Activated CD4-positive, alpha-beta T cell treated with anti-CD3 and anti-CD28 coated beads for 36 hours (primary cell): ENCODE measurements at regions of chr4 and their contacts with region 1.

Region 1: DNA sequence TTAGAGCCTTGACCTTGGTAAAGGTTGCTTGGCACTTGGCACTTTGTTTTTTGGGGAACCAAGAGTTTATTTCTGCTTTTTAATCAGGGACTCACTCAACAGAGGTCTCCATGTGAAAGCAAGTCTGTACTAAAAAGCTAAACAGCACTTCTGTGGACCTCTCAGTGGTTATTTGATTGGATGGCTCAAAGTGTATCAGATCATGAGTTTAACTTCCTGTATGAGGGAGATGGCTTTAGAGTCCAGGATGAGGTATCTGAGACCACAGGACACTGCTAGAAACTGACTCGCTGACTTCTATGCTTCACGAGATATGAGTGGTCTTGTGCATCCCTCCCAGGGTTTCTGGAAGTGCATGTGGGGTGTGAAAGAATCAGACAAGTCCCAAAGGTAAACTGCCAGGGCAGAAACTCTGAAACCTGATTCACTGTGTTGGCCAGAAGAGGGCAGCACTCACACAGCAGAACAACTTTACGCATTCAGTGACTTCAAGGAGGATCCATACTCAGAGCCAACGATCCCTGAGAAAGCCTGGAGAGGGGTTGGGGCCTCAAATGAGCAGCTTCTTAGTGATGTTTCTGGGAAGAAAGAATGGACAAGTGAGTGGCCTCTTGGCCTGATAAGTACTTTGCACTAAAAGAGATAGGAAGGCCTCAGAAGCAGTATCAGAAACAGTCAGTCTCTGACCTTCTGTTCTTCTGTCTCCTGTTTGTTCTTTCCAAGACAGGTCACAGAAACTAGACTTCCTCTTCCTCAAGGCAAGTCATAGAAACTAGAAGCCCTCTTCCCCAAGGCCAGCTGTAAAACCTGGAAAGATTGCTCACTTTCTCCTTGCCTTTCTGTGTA is 220.3 kb upstream of the CXCL13 start:
- DNase-seq: peak; percentile 77
- ATAC-seq: peak; percentile 76
- H3K4me3 Mint-ChIP-seq: no peak overlapping the region
- H3K27ac Mint-ChIP-seq: no peak overlapping the region
- H3K4me1 Mint-ChIP-seq: peaks cover 2% of the 10 kb centered on the region
- H3K27me3 Mint-ChIP-seq: no peaks in the 10 kb centered on the region

Region 2: DNA sequence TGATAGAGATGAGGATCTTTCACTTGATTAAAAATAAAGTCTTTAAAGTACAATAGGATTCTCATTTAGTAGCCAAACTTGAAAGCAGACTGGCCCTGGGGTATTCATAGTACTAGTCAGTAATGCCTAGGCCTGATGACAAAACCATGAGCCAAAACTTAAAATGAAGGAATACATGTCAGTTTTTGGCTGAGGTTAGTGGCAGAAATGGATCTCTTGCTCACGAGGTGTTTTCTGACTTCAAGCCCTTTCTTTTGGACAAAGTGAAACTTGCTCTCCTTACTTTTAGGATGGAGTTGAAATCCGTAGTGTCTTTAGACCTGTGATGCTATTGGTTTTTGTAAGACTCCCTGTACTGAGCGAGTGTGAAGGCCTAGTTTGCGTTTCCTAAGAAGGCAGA is 70.7 kb before region 1 on chr4:
- CTCF ChIA-PET with region 1: no interaction called
- POLR2A ChIA-PET with region 1: no interaction called
- intact Hi-C with region 1: no loop called
- DNase-seq: no peak
- ATAC-seq: no peak
- H3K4me3 Mint-ChIP-seq: no peak overlapping the region
- H3K27ac Mint-ChIP-seq: no peak overlapping the region
- H3K4me1 Mint-ChIP-seq: no peaks in the 10 kb centered on the region
- H3K27me3 Mint-ChIP-seq: peaks cover 4% of the 10 kb centered on the region

Region 3: DNA sequence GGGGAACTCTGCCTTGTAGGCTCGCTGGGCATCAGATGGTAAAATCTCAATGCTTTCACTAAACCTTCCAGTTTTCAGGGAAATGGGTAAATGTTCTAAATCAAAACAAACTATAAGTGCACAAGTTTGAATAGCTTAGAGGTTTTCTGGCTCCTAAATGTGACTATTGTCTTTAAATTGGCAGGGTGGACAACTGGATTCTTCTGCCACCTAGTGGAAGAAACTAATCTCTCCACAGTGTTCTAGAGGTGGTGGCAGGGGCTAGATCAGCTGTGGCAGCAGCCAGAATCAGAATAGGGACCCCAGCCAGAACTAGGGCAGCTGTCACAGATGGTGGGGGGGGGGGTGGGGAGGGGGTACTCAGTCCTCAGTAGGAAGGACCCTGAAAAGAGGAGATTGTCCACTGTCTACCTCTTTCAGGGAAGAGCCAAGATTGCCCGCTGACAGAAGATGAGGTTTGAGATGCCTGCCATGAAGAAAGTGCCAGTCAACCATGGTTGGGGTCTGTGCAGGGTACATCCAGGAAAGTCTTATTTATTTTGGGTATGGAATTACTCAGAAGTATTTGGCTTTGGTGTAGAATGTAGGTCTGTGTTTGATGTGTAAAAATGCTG is 26.9 kb before region 1 on chr4:
- CTCF ChIA-PET with region 1: interaction called, 17 read pairs
- POLR2A ChIA-PET with region 1: no interaction called
- intact Hi-C with region 1: no loop called
- DNase-seq: peak; percentile 10
- ATAC-seq: peak; percentile 42
- H3K4me3 Mint-ChIP-seq: no peak overlapping the region
- H3K27ac Mint-ChIP-seq: no peak overlapping the region
- H3K4me1 Mint-ChIP-seq: no peaks in the 10 kb centered on the region
- H3K27me3 Mint-ChIP-seq: no peaks in the 10 kb centered on the region

Region 4: GRCh38 chr4:77395481-77395880 is 10.1 kb after region 1 on chr4:
- CTCF ChIA-PET with region 1: interaction called, 16 read pairs
- POLR2A ChIA-PET with region 1: no interaction called
- intact Hi-C with region 1: no loop called
- DNase-seq: no peak
- ATAC-seq: no peak
- H3K4me3 Mint-ChIP-seq: no peak overlapping the region
- H3K27ac Mint-ChIP-seq: no peak overlapping the region
- H3K4me1 Mint-ChIP-seq: no peaks in the 10 kb centered on the region
- H3K27me3 Mint-ChIP-seq: peaks cover 2% of the 10 kb centered on the region

Region 5: GRCh38 chr4:77433418-77433733 is 48.0 kb after region 1 on chr4:
- CTCF ChIA-PET with region 1: interaction called, 11 read pairs
- POLR2A ChIA-PET with region 1: no interaction called
- intact Hi-C with region 1: loop called (anchors 1 kb)
- DNase-seq: peak; percentile 13
- ATAC-seq: peak; percentile 89
- H3K4me3 Mint-ChIP-seq: no peak overlapping the region
- H3K27ac Mint-ChIP-seq: no peak overlapping the region
- H3K4me1 Mint-ChIP-seq: peaks cover 9% of the 10 kb centered on the region
- H3K27me3 Mint-ChIP-seq: no peaks in the 10 kb centered on the region